ENCODE measurements at regions of chr5 and their contacts with region 1.

Region 1: GRCh38 chr5:145681686-145682085 is 153.5 kb downstream of the PRELID2 start:
- DNase-seq: peak; percentile 63
- H3K4me3 ChIP-seq: no peak overlapping the region
- H3K27ac ChIP-seq: no peak overlapping the region
- H3K4me1 ChIP-seq: no peaks in the 10 kb centered on the region
- H3K27me3 ChIP-seq: no peaks in the 10 kb centered on the region
- CTCF ChIP-seq: peak; percentile 92 to 94

Region 2: GRCh38 chr5:145362261-145362660 is 319.4 kb before region 1 on chr5:
- CTCF ChIA-PET with region 1: no interaction called
- dilution Hi-C with region 1: no loop called
- in situ Hi-C with region 1: no loop called
- intact Hi-C with region 1: loop called (anchors 10 kb)
- DNase-seq: peak; percentile 70
- H3K4me3 ChIP-seq: no peak overlapping the region
- H3K27ac ChIP-seq: peak overlapping the region; percentile 5
- H3K4me1 ChIP-seq: peaks cover 11% of the 10 kb centered on the region
- H3K27me3 ChIP-seq: no peaks in the 10 kb centered on the region
- CTCF ChIP-seq: no peak

Region 3: DNA sequence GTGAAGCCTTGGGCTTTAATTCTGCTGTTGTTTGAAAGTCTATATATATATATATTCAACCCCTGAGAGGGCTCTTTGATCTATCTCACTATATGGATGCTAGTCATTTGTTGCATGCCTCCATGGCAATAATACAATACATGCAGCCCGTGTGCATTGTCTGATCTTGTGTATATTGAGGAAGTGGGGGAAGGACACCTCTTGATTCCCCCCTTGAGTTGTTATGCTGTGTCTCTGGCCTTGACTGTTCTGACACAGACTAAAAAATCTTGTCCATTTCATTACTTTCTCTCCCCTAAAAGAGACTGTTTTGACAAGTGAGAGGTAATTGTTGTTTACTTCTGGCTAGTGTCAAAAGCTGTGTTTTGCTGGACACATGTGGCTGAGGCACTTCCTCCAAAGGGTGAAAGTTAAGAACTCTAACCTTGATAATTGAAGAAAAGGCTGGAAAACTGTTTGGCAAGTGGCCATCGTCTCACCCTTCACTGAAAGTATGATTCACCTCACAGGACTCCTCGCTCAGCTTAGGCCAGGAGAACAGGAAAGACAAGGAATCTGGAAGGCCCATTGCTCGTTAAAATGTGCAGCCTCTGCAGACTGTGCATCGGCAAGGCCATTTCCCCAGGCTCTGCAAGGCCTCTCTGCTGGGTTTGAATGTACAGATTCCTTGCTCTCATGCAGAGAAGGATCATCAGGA is 150.5 kb before region 1 on chr5:
- CTCF ChIA-PET with region 1: no interaction called
- dilution Hi-C with region 1: no loop called
- in situ Hi-C with region 1: no loop called
- intact Hi-C with region 1: no loop called
- DNase-seq: peak; percentile 87
- H3K4me3 ChIP-seq: no peak overlapping the region
- H3K27ac ChIP-seq: peak overlapping the region; percentile 20
- H3K4me1 ChIP-seq: peaks cover 13% of the 10 kb centered on the region
- H3K27me3 ChIP-seq: no peaks in the 10 kb centered on the region
- CTCF ChIP-seq: no peak

Region 4: DNA sequence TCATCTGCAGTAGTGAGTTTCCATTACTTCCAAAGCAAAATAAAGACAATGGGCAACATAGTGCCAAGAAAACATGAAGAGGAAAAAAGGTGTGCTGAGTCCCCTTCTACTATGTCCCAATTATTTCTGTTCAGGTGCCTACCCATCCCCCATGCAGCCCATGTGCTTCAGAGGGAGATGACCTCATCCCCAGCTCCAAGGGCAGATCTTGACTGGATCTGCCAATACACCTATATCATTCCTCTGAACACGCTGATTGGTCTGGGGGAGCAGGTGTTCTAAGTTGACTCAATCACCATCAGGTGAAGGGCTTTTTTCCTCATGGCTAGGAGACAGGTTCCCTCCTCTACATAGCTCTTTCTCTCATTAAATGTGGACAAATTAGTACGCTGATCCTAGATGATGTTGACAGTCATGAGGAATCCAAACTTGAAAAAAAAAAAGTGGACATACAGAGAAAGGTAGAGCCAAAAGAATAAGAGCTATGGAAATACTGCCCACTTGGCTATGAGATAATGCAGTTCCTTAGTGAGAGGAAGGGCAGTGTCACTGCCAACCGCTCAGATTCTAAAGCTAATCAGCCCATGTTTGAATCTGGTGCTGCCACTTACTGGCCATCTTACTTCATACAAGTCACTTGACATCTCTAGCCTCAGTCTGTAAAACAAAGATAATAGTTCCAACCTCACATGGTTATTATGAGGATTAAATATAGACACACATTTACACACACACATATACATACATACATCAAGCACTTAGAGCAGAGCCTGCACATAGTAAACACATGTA is 130.3 kb after region 1 on chr5:
- CTCF ChIA-PET with region 1: interaction called, 6 read pairs
- dilution Hi-C with region 1: no loop called
- in situ Hi-C with region 1: no loop called
- intact Hi-C with region 1: loop called (anchors 1 kb)
- DNase-seq: peak; percentile 31
- H3K4me3 ChIP-seq: no peak overlapping the region
- H3K27ac ChIP-seq: no peak overlapping the region
- H3K4me1 ChIP-seq: no peaks in the 10 kb centered on the region
- H3K27me3 ChIP-seq: no peaks in the 10 kb centered on the region
- CTCF ChIP-seq: peak in 1 of 2 donors; percentile 52

Region 5: GRCh38 chr5:145887976-145888574 is 206.4 kb after region 1 on chr5:
- CTCF ChIA-PET with region 1: interaction called, 4 read pairs
- dilution Hi-C with region 1: no loop called
- in situ Hi-C with region 1: no loop called
- intact Hi-C with region 1: loop called (anchors 1 kb)
- DNase-seq: peak; percentile 51
- H3K4me3 ChIP-seq: no peak overlapping the region
- H3K27ac ChIP-seq: no peak overlapping the region
- H3K4me1 ChIP-seq: no peaks in the 10 kb centered on the region
- H3K27me3 ChIP-seq: no peaks in the 10 kb centered on the region
- CTCF ChIP-seq: peak; percentile 93 to 96

Region 6: DNA sequence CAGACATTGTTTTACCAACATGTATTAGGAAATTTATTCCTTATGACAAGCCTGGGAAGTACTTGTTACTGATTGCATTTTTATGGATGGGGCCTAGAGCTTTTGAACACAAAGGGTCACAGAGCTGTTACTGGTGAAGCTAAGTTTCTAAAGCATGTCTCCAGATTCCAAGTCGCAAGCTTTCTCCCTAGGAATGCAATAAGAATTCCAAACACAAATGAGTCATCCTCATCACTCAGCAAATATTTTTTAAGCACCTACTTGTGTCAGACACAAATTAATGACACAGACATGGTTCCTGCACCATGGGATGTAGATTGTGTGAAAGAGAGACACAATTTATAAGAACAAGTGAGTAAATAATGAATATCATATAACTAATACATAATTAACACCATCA is 243.7 kb after region 1 on chr5:
- CTCF ChIA-PET with region 1: no interaction called
- dilution Hi-C with region 1: no loop called
- in situ Hi-C with region 1: no loop called
- intact Hi-C with region 1: no loop called
- DNase-seq: peak; percentile 74
- H3K4me3 ChIP-seq: no peak overlapping the region
- H3K27ac ChIP-seq: peak overlapping the region; percentile 96
- H3K4me1 ChIP-seq: peaks cover 51% of the 10 kb centered on the region
- H3K27me3 ChIP-seq: no peaks in the 10 kb centered on the region
- CTCF ChIP-seq: no peak

Region 7: DNA sequence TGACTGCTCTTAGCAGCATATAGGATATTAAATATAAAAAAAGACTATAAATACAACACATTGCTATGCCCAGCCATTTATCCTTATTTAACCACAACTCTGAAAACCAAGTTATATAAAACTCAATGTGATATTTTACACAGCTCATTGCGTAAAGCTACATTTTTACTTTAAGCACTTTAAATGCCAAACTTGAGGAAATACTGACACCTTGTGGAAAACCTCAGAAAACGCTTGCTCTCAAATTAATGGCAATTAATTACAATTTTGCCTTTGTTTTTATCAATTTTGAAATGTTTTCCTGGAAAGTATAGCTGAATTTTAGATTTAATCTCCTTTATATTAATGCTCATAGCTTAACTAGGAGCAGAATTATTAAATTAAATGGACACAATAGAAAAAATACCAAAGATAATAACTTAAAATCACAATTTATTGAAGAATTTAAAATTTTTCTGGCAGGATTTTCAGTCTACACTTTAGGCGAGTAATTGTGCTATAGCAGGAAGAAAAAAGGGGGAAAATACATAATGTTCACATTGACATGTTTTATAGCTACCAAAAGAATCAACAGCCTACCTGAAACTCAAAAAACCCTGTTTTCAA is 448.9 kb after region 1 on chr5:
- CTCF ChIA-PET with region 1: no interaction called
- dilution Hi-C with region 1: no loop called
- in situ Hi-C with region 1: no loop called
- intact Hi-C with region 1: loop called (anchors 10 kb)
- DNase-seq: peak; percentile 1
- H3K4me3 ChIP-seq: no peak overlapping the region
- H3K27ac ChIP-seq: no peak overlapping the region
- H3K4me1 ChIP-seq: no peaks in the 10 kb centered on the region
- H3K27me3 ChIP-seq: no peaks in the 10 kb centered on the region
- CTCF ChIP-seq: peak; percentile 54 to 72

Measured in mammary epithelial cell (primary cell).